ENCODE measurements at regions of chr4 and their contacts with region 1.

Region 1: GRCh38 chr4:37977471-37978247 is 17.5 kb downstream of the PTTG2 start:
- DNase-seq: peak; percentile 88 to 91 (median 90)
- H3K4me3 ChIP-seq: peak overlapping the region; percentile 65 to 90 (median 79)
- H3K27ac ChIP-seq: peak overlapping the region; percentile 50 to 70
- H3K4me1 ChIP-seq: peaks cover 8 to 36% (median 25%) of the 10 kb centered on the region in 4 experiments
- H3K27me3 ChIP-seq: no peaks in the 10 kb centered on the region

Region 2: DNA sequence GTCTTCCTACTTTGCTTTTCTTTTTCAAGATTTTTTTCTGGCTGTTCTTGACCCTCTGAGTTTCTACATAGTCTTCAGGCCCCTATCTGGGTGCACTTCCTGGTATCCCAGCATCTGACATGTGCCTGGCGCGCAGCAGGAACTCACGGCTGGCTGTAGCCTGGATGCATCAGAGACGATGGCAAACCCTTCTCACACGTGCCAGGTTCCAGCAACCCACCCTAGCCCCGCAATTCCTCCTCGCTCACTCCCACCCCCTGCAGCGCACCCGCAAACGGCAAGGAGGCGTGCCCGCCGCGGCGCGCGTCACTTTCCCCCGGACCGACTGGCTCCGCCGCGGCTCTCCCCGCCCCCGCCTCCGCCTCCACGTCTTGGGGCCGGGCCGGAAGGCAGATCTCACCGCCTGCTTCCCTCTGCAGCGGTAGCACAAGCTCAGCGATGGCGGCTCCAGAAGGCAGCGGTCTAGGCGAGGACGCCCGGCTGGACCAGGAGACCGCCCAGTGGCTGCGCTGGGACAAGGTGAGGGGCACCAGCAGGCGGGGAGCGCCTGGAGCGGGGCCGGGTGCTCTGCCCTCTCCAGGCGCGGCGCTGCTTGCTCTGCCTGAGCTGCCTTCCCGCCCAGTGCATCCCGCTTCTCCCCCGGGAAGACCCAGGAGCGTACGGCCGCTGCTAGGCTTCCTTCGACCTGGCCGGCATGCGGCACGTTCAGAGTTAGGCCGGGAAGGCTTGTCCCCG is 151.2 kb before region 1 on chr4 and contains the start of gene PGM2:
- CTCF ChIA-PET with region 1: no interaction called
- POLR2A ChIA-PET with region 1: no interaction called
- DNase-seq: peak; percentile 90 to 98 (median 97)
- H3K4me3 ChIP-seq: peak within 1 kb of the TSS; percentile 87 to 98 (median 97)
- H3K27ac ChIP-seq: peak within 1 kb of the TSS; percentile 75 to 86
- H3K4me1 ChIP-seq: peaks cover 11 to 30% (median 20%) of the 10 kb centered on the region in 4 experiments
- H3K27me3 ChIP-seq: no peaks in the 10 kb centered on the region

Region 3: GRCh38 chr4:37989398-37990260 is 12.0 kb after region 1 on chr4:
- CTCF ChIA-PET with region 1: interaction called, 10 read pairs
- POLR2A ChIA-PET with region 1: no interaction called
- DNase-seq: peak; percentile 45 to 88 (median 80)
- H3K4me3 ChIP-seq: peak overlapping the region in 1 of 7 experiments; percentile 17
- H3K27ac ChIP-seq: peak overlapping the region; percentile 2 to 67
- H3K4me1 ChIP-seq: peaks cover 21 to 35% (median 32%) of the 10 kb centered on the region in 4 experiments
- H3K27me3 ChIP-seq: no peaks in the 10 kb centered on the region

Region 4: DNA sequence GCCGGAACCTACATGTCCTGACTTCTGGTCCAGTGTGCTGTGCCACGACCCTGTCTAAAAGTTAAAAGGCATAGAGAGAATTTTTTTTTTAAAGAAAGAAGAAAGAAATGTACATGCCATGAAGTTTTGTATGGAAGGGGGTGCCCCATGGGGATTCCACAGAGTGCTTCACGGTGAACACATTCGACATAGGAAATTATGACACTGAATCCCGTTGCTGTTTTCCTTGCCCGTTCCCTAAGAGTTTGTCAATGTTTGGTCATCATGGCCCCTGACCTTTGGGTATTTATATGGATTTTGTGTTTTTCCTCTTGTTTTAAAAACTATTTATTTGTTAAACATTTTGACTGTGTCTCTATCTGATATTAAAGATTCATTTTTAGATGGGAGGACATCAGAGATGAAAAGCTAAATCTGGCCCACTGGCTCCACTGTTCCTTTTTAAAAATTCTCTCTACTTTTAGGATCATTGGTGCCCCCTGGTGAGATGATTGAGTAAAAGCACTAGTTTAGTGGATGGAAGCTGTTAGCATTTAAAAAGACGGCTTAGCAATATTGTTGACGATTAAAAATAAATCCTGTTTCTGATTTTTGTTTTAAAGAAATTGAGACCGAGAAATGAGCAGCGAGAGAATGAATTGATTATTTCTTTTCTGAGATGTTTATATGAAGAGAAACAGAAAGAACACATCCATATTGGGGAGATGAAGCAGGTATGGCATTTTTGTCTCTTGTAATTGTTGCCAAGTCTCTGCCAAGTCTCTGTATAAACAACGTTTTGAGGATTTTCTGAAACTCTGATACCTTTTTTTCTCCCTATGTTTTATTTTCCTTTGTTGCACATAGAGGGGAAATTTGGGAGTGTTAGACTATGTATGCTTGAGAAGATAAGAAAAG is 57.6 kb after region 1 on chr4:
- CTCF ChIA-PET with region 1: interaction called, 15 read pairs
- POLR2A ChIA-PET with region 1: no interaction called
- DNase-seq: peak; percentile 65 to 84 (median 79)
- H3K4me3 ChIP-seq: no peak overlapping the region
- H3K27ac ChIP-seq: no peak overlapping the region
- H3K4me1 ChIP-seq: peaks cover 0 to 1% (median 0%) of the 10 kb centered on the region in 4 experiments
- H3K27me3 ChIP-seq: no peaks in the 10 kb centered on the region

Measured in common myeloid progenitor, CD34-positive (primary cell).